Posterior cingulate gyrus (tissue), 11 donors: ENCODE measurements at regions of chr11 and their contacts with region 1.

Region 1: DNA sequence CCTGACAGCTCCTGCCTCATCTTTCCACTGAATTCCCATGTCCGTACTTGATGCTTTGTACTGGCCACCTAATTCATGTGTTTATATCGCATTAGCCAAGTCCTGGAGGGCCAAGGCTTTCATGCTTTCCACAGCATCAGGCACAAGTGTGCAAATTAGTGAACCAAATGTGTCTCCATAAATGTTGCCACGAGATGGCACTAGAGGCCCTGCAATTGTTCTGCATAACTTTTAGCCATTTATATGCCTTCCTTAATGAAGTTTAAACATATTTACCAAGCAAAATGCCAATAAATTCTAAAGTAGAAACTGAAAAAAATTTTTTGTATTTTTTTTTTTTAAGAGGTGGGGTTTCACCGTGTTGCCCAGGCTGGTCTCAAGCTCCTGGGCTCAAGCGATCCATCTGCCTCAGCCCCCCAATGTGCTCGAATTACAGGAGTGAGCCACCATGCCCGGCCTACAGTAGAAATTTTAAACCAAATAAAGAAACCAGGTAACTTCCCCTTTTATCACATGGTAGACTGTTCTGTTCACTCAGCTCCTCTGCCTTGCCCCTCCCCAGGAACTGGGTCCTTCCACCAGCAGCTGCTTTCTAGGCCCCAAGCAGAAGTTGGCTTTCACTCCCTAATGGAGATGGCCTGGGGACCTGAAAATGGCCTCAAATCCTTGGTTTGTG is 20.8 kb upstream of the IL18BP start:
- DNase-seq: peak in 6 of 10 donors; percentile 19 to 86 (median 63)

Region 2: DNA sequence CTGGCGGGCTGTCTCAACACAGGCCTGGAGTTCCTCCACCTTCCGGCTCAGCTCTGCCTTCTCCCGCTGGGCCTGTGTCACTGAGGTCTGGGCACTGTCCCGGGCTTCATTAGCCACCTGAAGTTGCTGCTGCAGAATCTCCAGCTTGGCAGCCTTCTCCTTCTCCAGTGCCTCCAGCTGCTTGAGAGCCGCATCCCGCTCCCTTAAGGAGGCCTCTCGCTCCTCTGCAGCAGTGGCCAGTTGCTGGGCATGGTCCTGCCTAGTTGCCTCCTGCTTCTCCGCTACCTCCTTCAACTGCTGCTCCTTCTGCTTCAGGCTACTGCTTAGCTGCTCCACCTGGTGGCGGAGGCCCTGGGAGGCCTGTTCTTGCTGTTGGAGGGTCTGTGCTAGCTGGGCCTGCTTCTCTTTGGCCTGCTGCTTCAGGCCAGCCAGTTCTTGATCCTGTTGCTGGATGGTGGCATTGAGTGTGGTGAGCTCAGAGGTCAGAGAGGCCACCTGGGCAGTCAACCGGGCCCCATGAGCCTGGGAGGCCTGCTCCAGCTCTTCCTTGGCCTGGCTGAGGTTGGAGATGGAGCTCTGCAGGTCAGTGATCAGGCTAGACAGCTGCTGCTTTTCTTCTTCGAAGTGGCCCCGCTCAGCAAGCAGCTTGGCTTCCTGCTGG is 37.8 kb after region 1 on chr11:
- intact Hi-C with region 1: loop called (anchors 5 kb)
- DNase-seq: peak in 3 of 10 donors; percentile 70 to 91 (median 81)

Region 3: DNA sequence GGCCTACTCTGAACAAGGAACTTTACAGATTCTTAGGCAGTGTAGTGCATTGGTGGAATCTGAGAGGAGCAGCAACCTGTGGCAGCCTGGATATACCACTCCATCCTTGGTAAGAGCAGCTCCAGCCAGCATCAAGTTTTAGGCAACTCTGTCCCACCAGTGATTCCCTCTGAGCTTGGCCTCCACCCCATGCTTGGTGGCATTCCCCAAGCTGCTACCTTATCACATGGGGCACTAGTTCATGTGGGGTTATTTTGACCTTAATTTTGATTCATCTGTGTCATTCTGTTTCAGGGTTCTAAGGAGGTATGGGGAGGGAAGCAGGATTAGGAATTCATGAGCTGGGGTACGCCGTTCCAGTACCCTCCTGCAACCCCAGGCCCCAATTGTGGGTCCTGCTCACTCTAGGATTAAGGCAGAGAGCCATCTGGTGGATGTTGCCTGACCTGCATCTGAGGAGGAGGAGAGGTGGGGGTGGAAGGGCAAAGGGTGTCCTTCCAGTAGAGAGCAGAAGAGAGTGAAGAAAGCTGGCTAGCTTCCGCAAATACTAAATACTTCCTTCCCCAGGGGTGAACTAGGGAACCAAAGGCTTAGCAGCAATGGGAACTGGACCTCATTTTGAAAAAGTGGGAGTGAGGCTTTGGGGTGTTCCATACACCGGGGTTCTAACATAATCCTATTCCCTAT is 113.3 kb after region 1 on chr11:
- intact Hi-C with region 1: loop called (anchors 5 kb)
- DNase-seq: peak in 8 of 10 donors; percentile 64 to 93 (median 77)

Region 4: DNA sequence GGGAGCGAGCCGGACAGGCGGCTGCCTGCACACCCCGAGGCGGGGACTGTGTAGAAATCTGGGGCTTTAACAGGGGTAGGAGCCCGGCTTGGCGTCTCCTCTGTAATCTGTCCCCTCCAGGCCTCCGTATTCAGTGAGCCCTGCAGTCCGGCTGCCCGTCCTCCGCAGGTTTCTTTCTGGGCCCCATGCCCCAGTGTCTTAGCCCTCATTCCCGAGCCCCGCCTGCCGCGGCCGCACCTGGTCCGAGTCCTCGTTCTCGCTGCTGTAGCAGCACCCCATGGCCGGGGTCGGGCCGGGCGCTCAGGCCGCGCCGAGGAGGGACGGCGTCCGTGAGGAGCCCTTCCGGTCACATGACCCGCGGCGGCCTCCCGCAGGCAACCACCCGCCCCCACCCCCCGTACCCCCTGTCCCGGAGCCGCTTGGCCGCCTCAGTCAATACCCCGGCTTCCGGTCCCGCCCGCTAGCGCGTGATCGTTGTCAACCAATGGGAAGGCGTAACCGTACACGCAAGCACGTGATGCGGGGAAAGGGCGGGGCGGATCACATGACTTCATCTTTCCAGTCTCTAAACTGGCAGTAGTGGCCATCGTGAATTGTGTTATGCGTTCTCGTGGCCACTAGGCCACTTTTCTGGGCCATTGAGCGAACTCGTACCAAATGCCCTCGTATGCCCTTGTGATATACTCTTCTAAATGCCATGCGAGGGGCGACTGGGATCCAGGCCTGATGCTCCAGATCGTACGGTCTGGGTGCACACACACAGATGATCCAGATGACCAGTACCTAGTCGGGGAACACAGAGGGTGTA is 125.3 kb after region 1 on chr11 and contains the start of gene LAMTOR1:
- intact Hi-C with region 1: no loop called
- DNase-seq: peak; percentile 97 to 100 (median 99)

Region 5: DNA sequence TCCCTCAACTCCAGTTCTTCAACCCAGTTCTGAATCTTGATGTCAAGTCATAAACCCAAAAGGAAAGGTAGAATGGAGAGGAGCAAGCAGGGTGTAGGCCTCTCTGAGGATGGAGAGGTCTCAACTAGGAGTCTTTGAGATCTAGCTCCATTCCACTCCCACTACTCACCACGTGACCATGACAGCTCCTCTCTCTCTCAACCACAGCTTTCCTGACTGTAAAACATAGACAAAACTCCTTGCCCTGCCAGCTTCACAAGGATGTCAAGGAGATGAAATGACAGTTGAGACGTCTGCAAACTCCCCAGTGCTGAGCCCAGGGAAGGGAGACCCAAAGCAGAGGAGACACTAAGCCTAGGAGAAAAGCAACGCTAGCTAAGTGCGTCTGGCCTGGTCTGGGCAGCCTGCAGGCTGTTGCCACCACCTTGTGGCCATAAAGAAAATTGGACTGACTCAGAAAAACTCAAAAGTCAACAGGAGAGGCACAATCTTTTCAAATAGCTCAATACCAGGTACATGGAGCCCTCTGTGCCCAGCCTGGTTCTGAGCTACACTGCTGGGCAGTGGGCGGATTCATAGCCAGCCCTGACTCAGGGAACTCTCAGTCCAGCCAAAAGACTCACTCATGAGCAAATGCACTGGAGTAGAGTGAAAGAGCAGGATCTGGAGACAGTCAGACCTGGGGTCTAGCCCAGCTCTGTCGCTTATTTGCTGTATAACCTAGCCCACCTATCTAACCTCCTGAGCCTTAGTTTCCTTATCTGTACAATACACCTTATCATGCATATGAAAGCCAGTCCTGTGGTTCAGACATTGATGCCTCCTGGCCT is 453.1 kb after region 1 on chr11:
- intact Hi-C with region 1: loop called (anchors 5 kb)
- DNase-seq: peak in 8 of 10 donors; percentile 25 to 92 (median 55)